Caco-2 (cell line): ENCODE measurements at regions of chr16 and their contacts with region 1.

Region 1: DNA sequence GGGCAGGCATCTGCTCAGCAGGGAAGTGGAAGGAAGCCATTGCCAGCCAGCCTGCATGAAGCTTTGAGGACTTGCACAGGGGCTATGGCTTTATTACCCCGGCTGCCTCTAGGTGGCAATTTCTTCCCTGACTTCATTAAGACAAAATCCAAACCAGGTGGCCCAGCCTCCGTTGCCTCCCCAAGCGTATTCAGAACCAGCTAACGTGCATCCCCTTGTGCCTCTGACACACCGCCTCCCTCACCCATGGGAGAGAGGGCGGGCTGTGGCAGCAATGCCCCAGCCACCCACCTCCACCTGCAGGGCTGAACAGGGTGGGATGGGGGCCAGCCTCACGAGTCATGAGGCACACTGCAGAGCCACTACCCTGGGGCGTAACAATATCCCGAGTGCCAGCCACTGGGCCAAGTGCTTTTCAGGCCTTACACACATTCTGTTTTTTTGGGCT is 6.8 kb downstream of the KIFC3 start:
- DNase-seq: peak; percentile 76 to 82
- H3K4me3 ChIP-seq: no peak overlapping the region
- H3K4me3 Mint-ChIP-seq: peak overlapping the region; percentile 9
- H3K27ac Mint-ChIP-seq: peak overlapping the region; percentile 69
- H3K4me1 ChIP-seq: peaks cover 46% of the 10 kb centered on the region
- H3K4me1 Mint-ChIP-seq: peaks cover 40% of the 10 kb centered on the region
- H3K27me3 ChIP-seq: no peaks in the 10 kb centered on the region
- H3K27me3 Mint-ChIP-seq: no peaks in the 10 kb centered on the region
- CTCF ChIP-seq: peak; percentile 75

Region 2: GRCh38 chr16:57810197-57811031 is 15.0 kb after region 1 on chr16:
- CTCF ChIA-PET with region 1: interaction called, 6 read pairs
- POLR2A ChIA-PET with region 1: interaction called, 9 read pairs
- intact Hi-C with region 1: loop called (anchors 1 kb)
- DNase-seq: peak; percentile 92 to 97
- H3K4me3 ChIP-seq: no peak overlapping the region
- H3K4me3 Mint-ChIP-seq: peak overlapping the region; percentile 51
- H3K27ac Mint-ChIP-seq: peak overlapping the region; percentile 93
- H3K4me1 ChIP-seq: peaks cover 86% of the 10 kb centered on the region
- H3K4me1 Mint-ChIP-seq: peaks cover 73% of the 10 kb centered on the region
- H3K27me3 ChIP-seq: no peaks in the 10 kb centered on the region
- H3K27me3 Mint-ChIP-seq: no peaks in the 10 kb centered on the region
- CTCF ChIP-seq: no peak

Region 3: GRCh38 chr16:57821149-57821986 is 25.9 kb after region 1 on chr16:
- CTCF ChIA-PET with region 1: interaction called, 10 read pairs
- POLR2A ChIA-PET with region 1: interaction called, 4 read pairs
- intact Hi-C with region 1: loop called (anchors 1 kb)
- DNase-seq: peak; percentile 86 to 88
- H3K4me3 ChIP-seq: no peak overlapping the region
- H3K4me3 Mint-ChIP-seq: peak overlapping the region; percentile 40
- H3K27ac Mint-ChIP-seq: peak overlapping the region; percentile 93
- H3K4me1 ChIP-seq: peaks cover 88% of the 10 kb centered on the region
- H3K4me1 Mint-ChIP-seq: peaks cover 80% of the 10 kb centered on the region
- H3K27me3 ChIP-seq: no peaks in the 10 kb centered on the region
- H3K27me3 Mint-ChIP-seq: no peaks in the 10 kb centered on the region
- CTCF ChIP-seq: no peak

Region 4: DNA sequence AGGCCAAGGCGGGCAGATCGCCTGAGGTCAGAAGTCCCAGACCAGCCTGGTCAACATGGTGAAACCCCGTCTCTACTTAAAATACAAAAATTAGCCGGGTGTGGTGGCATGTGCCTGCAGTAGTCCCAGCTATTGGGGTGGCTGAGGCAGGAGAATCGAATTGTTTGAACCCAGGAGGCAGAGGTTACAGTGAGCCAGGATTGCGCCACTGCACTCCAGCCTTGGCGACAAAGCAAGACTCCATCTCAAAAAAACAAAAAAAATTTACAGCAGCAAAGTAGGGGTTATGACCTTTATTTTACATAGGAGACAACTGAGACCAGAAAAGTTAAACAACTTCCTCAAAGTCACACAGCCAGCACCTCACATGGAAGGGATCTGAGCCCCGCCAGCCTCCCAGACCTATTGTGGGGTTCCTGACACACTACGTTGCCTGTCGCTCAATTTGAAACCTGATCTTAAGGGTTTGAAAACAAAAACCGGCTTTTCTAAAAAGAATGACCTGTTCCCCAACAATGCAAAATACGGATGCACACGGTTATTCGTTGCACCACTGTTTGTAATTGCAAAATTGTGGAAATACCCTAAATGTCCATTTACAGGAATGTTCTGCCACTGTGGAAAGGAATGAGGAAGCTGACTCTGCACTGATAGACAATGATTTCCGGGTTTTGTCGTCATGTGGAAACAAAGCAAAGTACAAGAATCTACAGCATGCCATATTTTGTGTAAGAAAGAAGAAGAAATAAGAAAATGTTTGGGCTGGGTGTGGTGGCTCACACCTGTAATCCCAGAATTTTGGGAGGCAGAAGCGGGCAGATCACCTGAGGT is 98.3 kb after region 1 on chr16:
- CTCF ChIA-PET with region 1: interaction called, 5 read pairs
- POLR2A ChIA-PET with region 1: no interaction called
- intact Hi-C with region 1: loop called (anchors 1 kb)
- DNase-seq: peak; percentile 73 to 74
- H3K4me3 ChIP-seq: no peak overlapping the region
- H3K4me3 Mint-ChIP-seq: peak overlapping the region; percentile 61
- H3K27ac Mint-ChIP-seq: peak overlapping the region; percentile 88
- H3K4me1 ChIP-seq: peaks cover 33% of the 10 kb centered on the region
- H3K4me1 Mint-ChIP-seq: peaks cover 42% of the 10 kb centered on the region
- H3K27me3 ChIP-seq: no peaks in the 10 kb centered on the region
- H3K27me3 Mint-ChIP-seq: no peaks in the 10 kb centered on the region
- CTCF ChIP-seq: no peak

Region 5: GRCh38 chr16:58000706-58001676 is 205.5 kb after region 1 on chr16 and contains the start of gene USB1:
- CTCF ChIA-PET with region 1: no interaction called
- POLR2A ChIA-PET with region 1: interaction called, 3 read pairs
- intact Hi-C with region 1: loop called (anchors 5 kb)
- DNase-seq: peak; percentile 92 to 97
- H3K4me3 ChIP-seq: peak within 1 kb of the TSS; percentile 88
- H3K4me3 Mint-ChIP-seq: peak within 1 kb of the TSS; percentile 96
- H3K27ac Mint-ChIP-seq: peak within 1 kb of the TSS; percentile 73
- H3K4me1 ChIP-seq: peaks cover 17% of the 10 kb centered on the region
- H3K4me1 Mint-ChIP-seq: no peaks in the 10 kb centered on the region
- H3K27me3 ChIP-seq: no peaks in the 10 kb centered on the region
- H3K27me3 Mint-ChIP-seq: no peaks in the 10 kb centered on the region
- CTCF ChIP-seq: peak; percentile 76 to 97
- total RNA-seq, gene USB1: 90.5 and 91.2 TPM in 2 replicates